K562 (cell line): ENCODE measurements at regions of chr1 and their contacts with region 1.

Region 1: DNA sequence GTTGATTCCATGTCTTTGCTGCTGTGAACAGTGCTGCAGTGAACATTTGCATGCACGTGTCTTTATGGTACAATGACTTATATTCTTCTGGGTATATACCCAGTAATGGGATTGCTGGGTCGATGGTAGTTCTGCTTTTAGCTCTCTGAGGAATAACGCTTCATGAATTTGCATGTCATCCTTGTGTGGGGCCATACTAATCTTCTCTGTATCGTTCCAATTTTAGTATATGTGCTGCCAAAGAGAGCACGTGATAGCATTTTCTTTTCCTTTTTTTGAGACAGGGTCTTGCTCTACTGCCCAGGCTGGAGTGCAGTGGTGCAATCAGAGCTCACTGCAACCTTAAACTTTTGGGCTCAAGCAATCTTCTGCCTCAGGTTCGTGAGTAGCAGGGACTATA is 24.9 kb upstream of the MAP1LC3C start:
- DNase-seq: no peak
- ATAC-seq: no peak
- H3K4me3 ChIP-seq: no peak overlapping the region
- H3K27ac ChIP-seq: no peak overlapping the region
- H3K4me1 ChIP-seq: no peaks in the 10 kb centered on the region; a peak in 1 of 5 replicates
- H3K27me3 ChIP-seq: peaks cover 7 to 8% of the 10 kb centered on the region in 2 experiments; a peak in 4 of 5 replicates
- CTCF ChIP-seq: no peak
- EP300 ChIP-seq: no peak
- POLR2A ChIP-seq: no peak
- RAD21 ChIP-seq: no peak

Region 2: DNA sequence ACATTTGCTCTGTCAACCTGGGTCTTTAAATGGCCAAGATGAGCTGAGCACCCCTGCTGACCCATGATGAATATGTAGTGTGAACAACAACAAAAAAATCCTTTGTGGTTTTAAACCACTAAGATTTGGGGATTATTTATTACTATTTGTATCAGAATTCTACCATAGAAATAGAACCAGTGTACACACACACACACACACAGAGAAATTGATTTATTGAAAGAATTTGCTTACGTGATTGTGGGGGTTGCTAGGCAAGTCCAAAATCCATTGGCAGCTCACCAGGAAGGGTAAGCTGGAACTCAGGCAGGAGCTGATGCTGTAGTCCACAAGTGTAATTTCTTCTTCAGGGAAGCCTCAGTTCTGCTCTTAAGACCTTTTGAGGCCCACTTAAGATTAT is 57.6 kb after region 1 on chr1:
- CTCF ChIA-PET with region 1: no interaction called
- POLR2A ChIA-PET with region 1: no interaction called
- in situ Hi-C with region 1: no loop called
- intact Hi-C with region 1: no loop called
- DNase-seq: no peak
- ATAC-seq: no peak
- H3K4me3 ChIP-seq: no peak overlapping the region
- H3K27ac ChIP-seq: no peak overlapping the region
- H3K4me1 ChIP-seq: no peaks in the 10 kb centered on the region
- H3K27me3 ChIP-seq: no peaks in the 10 kb centered on the region
- CTCF ChIP-seq: no peak
- EP300 ChIP-seq: no peak
- POLR2A ChIP-seq: no peak
- RAD21 ChIP-seq: no peak

Region 3: GRCh38 chr1:242454262-242455045 is 430.6 kb after region 1 on chr1:
- CTCF ChIA-PET with region 1: no interaction called
- POLR2A ChIA-PET with region 1: no interaction called
- in situ Hi-C with region 1: no loop called
- intact Hi-C with region 1: loop called (anchors 10 kb)
- DNase-seq: peak; percentile 45 to 52 (median 50)
- ATAC-seq: peak; percentile 86
- H3K4me3 ChIP-seq: no peak overlapping the region
- H3K27ac ChIP-seq: no peak overlapping the region
- H3K4me1 ChIP-seq: no peaks in the 10 kb centered on the region
- H3K27me3 ChIP-seq: no peaks in the 10 kb centered on the region
- CTCF ChIP-seq: peak; percentile 56 to 76 (median 66)
- EP300 ChIP-seq: no peak
- POLR2A ChIP-seq: no peak
- RAD21 ChIP-seq: peak; percentile 50 to 70